Activated CD8-positive, alpha-beta memory T cell treated with anti-CD3 and anti-CD28 coated beads, Interleukin-2, amount 10 ng/mL, durations not matched to agents 7 days and 5 days (primary cell): ENCODE measurements at regions of chr22 and their contacts with region 1.

Region 1: DNA sequence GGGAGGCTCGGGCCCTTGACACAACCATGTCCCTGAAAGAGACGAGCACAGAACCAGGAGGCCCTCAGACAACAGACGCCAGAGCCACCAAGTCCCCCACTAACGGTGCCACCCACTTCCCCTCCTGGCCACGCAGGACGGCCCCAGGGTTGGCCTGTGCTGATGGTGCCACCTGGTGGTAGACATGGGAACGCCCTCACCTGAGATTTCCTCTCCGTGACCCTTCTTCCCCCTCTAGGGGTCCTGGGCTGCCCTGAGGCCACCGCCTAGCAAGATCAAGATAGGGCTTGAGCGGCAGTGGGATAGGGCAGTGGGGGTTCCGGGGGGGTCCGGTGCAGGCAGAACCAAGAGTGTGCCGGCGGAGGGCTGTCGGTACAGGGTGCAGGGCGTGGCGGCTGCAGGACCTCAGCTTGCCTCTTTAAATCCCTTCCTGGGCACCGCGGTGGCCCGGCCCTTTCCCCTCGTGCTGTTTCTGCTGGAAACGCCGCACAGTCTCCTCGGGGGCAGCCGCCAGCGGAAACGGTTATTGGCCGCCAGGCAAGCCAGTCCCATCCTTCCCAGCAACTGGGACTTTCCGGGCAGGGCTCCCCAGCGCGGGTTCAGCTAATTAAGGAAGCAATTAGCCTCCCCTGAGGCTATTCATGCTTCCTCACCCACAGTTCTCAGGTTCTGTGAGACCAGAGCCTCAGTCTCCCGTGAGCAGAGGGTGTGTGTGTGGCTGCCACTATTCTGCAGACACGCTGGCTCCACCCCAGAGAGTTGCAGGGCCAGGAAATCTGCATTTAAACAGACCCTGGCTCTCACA is 5.5 kb upstream of the NFAM1 start:
- DNase-seq: peak; percentile 88
- ATAC-seq: peak; percentile 94
- H3K4me3 Mint-ChIP-seq: peak overlapping the region; percentile 72
- H3K27ac Mint-ChIP-seq: peak overlapping the region; percentile 74
- H3K4me1 Mint-ChIP-seq: peaks cover 26% of the 10 kb centered on the region
- H3K27me3 Mint-ChIP-seq: peaks cover 14% of the 10 kb centered on the region

Region 2: GRCh38 chr22:42169055-42169469 is 268.6 kb before region 1 on chr22:
- CTCF ChIA-PET with region 1: interaction called, 66 read pairs
- DNase-seq: peak; percentile 88
- ATAC-seq: peak; percentile 89
- H3K4me3 Mint-ChIP-seq: no peak overlapping the region
- H3K27ac Mint-ChIP-seq: peak overlapping the region; percentile 35
- H3K4me1 Mint-ChIP-seq: peaks cover 20% of the 10 kb centered on the region
- H3K27me3 Mint-ChIP-seq: no peaks in the 10 kb centered on the region

Region 3: GRCh38 chr22:42528258-42528948 is 90.7 kb after region 1 on chr22:
- CTCF ChIA-PET with region 1: no interaction called
- DNase-seq: no peak
- ATAC-seq: no peak
- H3K4me3 Mint-ChIP-seq: no peak overlapping the region
- H3K27ac Mint-ChIP-seq: no peak overlapping the region
- H3K4me1 Mint-ChIP-seq: peaks cover 6% of the 10 kb centered on the region
- H3K27me3 Mint-ChIP-seq: peaks cover 5% of the 10 kb centered on the region

Region 4: DNA sequence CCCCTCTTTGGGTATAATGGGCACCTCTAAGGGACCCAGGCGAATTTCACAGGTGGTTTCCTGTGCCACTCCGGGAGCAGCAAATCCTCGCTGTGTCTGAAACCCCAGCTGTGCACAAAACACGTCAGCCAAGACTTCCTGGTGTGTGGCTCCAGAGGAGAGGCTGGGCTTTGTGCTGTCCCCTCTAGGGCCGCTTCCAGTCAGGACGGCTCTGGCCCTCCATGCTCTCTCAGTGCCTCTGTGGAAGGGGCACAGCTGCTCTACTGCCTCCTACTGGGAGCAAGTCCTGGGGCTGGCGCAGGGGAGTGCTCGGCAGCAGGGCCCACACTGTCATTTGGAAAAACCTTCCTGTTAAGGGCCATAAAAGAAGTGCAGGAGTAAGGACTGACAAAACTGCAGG is 443.1 kb after region 1 on chr22:
- CTCF ChIA-PET with region 1: no interaction called
- DNase-seq: no peak
- ATAC-seq: no peak
- H3K4me3 Mint-ChIP-seq: no peak overlapping the region
- H3K27ac Mint-ChIP-seq: no peak overlapping the region
- H3K4me1 Mint-ChIP-seq: no peaks in the 10 kb centered on the region
- H3K27me3 Mint-ChIP-seq: no peaks in the 10 kb centered on the region